KBM-7 (cell line): ENCODE measurements at regions of chr15 and their contacts with region 1.

Region 1: DNA sequence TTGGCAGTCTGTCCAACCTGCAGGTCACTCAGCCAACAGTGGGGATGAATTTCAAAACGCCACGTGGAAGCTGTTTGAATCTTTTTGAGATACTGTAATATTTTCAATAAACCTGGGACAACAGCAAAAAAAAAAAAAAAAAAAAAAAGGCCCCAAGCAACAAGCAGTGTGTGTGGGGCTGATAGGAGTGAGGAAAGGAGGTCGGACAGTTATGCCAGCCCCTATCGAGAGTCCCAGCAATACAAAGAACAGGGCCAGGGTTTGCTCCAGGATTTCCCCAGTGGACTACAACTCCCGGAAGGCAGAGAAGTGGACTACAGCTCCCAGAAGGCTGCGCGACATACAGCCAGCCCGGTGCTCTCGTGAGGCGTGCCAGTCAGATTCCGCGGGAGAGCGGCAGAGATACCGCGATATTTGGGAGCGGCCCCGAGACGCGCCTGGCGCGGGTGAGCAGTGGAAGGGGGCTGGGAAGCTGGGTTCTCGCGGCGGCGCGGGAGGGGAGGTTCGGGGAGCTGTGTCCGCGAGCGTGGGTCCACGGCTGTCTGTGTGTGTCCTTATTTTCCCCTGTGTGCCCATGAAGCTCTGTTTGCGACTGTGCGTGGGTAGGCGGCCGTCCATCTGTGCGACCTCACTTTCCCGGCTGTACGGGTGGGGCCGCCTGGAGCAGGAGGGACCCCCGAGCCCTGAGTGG is at the start of gene PPCDC:
- DNase-seq: peak; percentile 99

Region 2: DNA sequence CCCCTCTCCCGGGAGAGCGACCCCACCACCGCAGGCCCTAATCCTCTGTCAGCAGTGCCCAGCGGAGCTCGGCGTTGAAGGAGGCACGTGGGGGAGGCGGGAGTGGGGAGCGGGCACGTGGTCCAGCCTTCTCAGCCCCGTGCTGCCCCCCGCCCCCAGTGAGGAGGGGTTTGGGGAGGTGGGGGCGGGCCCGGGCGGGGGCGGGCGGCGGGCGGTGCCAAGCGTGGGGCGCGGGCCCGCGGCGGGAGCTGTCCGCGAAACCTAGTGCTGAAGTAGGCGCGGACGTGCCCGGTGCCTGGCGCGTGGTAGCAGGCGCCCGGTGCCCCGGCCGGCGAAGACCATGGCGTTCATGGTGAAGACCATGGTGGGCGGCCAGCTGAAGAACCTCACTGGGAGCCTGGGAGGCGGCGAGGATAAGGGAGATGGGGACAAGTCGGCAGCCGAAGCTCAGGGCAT is 196.9 kb before region 1 on chr15 and contains the start of gene CPLX3:
- in situ Hi-C with region 1: no loop called
- DNase-seq: peak; percentile 42

Region 3: GRCh38 chr15:74928771-74929198 is 94.5 kb before region 1 on chr15:
- in situ Hi-C with region 1: no loop called
- DNase-seq: no peak

Region 4: DNA sequence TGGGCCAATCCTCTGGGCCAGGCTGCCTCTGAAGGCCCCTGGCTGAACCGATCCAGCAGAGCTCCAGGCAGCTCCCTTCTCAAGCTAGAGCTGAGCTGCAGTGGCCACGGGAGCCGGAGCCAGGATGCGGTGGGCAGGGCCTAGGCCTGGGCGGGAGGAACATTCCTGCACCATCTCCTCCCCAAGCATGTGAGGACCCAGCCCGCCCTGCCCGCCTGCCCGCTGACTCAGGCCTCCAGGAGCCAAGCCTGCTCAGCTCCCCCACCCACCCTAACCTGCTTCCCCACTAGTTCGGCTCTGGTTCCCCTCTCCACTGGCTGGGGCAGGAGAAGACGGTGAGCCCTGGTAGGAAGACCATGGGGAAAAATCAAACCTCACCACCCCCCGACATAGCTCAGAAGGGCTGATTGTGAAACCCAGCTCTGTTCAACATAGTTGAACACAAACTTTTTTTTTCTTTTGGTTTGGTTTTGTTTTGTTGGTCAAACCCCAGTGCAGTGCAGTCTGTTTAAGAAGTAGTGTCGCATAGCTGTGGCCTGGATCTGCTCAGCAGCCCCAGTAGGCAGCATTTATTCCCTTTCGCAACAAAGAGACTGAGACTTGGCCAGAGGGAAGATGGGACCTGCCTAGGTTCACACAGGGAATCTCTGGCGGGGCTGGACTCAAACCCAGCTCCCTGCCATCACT is 637.9 kb after region 1 on chr15:
- in situ Hi-C with region 1: loop called (anchors 25 kb)
- DNase-seq: no peak